Left lung (tissue), 14 donors: ENCODE measurements at regions of chr10 and their contacts with region 1.

Region 1: GRCh38 chr10:87931836-87932230 is 68.4 kb downstream of the PTEN start:
- DNase-seq: no peak
- ATAC-seq: no peak
- H3K4me3 ChIP-seq: no peak overlapping the region
- H3K27ac ChIP-seq: no peak overlapping the region
- H3K4me1 ChIP-seq: peaks cover 7 to 47% of the 10 kb centered on the region in 2 donors
- H3K27me3 ChIP-seq: no peaks in the 10 kb centered on the region
- CTCF ChIP-seq: no peak

Region 2: GRCh38 chr10:87878664-87879459 is 53.0 kb before region 1 on chr10:
- intact Hi-C with region 1: loop called in 1 of 2 experiments (anchors 10 kb)
- DNase-seq: no peak
- ATAC-seq: no peak
- H3K4me3 ChIP-seq: no peak overlapping the region
- H3K27ac ChIP-seq: no peak overlapping the region
- H3K4me1 ChIP-seq: peaks cover 10 to 49% of the 10 kb centered on the region in 2 donors
- H3K27me3 ChIP-seq: no peaks in the 10 kb centered on the region
- CTCF ChIP-seq: no peak

Region 3: DNA sequence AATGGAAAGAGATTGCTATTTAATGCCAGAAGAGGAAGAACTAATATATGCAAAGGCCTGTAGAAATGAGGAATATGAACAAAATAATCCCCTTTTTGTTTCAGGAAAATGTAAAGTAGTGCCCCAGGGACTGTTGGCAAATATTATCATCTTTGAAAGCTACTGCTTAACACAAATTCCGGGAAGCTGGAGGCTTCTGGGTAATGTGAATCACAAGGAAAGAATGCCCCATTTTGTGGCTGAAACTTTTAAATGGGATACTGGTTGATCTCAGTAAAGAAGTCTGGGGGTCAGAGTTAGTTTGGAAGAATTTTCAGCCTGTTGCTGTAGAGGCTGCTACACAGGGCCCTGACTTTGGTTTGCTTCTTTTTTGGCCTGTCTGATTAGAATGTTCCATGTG is 72.6 kb after region 1 on chr10:
- intact Hi-C with region 1: no loop called
- DNase-seq: no peak
- ATAC-seq: no peak
- H3K4me3 ChIP-seq: no peak overlapping the region
- H3K27ac ChIP-seq: no peak overlapping the region
- H3K4me1 ChIP-seq: no peaks in the 10 kb centered on the region
- H3K27me3 ChIP-seq: no peaks in the 10 kb centered on the region
- CTCF ChIP-seq: no peak